Uterus (tissue), 4 donors: ENCODE measurements at regions of chr11 and their contacts with region 1.

Region 1: GRCh38 chr11:67507864-67508485 is at the start of gene CDK2AP2:
- DNase-seq: peak; percentile 98 to 99
- H3K4me3 ChIP-seq: peak within 1 kb of the TSS; percentile 61 to 81
- H3K27ac ChIP-seq: peak within 1 kb of the TSS; percentile 90 to 93
- H3K4me1 ChIP-seq: peaks cover 0 to 18% of the 10 kb centered on the region in 2 donors
- H3K27me3 ChIP-seq: no peaks in the 10 kb centered on the region
- CTCF ChIP-seq: peak in 1 of 4 experiments; percentile 4
- POLR2A ChIP-seq: peak; percentile 84 to 88
- total RNA-seq, gene CDK2AP2: 2.1 to 28.7 (median 6.9) TPM

Region 2: DNA sequence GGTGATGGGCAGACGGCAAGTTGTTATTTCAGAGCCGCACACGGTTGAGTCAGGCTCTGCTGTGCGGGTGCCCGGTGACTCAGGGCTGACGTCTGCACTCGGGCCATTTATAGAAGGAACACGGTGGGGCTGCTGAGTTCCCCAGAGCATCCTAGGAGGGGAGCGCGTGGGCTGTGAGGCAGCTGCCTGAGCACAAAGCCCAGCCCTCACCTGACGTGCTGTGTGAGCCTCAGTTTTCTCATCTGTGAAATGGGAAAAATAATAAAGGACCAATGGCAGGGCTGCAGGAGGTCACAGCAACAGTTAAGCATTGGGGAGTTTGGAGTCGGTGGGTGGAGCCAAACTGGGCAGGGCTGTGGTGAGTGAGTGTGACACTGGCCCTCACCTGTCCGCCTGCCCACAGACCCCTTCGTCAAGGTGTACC is 462.6 kb before region 1 on chr11:
- intact Hi-C with region 1: no loop called
- DNase-seq: peak in 1 of 2 donors; percentile 23
- H3K4me3 ChIP-seq: no peak overlapping the region
- H3K27ac ChIP-seq: no peak overlapping the region
- H3K4me1 ChIP-seq: no peaks in the 10 kb centered on the region
- H3K27me3 ChIP-seq: no peaks in the 10 kb centered on the region
- CTCF ChIP-seq: no peak
- POLR2A ChIP-seq: no peak

Region 3: DNA sequence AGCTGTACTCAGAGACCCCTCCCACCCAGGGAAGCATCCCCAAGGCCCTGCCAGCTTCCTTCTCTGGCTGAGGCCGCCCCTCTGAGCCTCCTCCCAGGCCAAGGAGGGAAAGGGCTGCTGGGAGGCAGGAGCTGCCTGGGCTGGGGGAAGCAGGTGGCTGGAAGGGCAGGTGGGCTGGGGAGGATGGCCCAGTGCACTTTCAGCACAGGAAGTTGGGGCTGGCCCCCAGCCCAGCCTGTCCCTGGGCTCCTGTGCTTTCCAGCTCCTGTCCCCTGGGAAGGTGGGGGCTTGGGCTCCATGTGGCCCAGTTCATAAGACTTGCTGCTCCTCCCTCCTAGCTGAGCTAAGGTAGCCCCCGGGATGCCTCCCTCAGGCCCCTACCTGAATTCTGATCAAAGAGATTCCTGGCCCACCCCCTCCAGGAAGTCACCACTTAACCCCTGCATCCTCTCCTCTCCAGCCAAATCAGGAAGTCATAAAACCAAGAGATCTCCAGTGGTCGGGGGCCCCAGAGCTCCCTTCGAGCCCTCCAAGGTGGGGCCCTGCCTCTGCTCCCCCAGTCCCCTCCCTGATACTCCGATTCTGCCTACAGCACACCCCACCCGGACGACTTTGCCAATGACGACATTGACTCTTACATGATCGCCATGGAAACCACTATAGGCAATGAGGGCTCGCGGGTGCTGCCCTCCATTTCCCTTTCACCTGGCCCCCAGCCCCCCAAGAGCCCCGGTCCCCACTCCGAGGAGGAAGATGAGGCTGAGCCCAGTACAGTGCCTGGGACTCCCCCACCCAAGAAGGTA is 111.2 kb before region 1 on chr11:
- intact Hi-C with region 1: loop called (anchors 5 kb)
- DNase-seq: no peak
- H3K4me3 ChIP-seq: no peak overlapping the region
- H3K27ac ChIP-seq: peak overlapping the region in 1 of 2 donors; percentile 4
- H3K4me1 ChIP-seq: peaks cover 0 to 7% of the 10 kb centered on the region in 2 donors
- H3K27me3 ChIP-seq: no peaks in the 10 kb centered on the region
- CTCF ChIP-seq: no peak
- POLR2A ChIP-seq: no peak